ENCODE measurements at regions of chr12 and their contacts with region 1.

Region 1: DNA sequence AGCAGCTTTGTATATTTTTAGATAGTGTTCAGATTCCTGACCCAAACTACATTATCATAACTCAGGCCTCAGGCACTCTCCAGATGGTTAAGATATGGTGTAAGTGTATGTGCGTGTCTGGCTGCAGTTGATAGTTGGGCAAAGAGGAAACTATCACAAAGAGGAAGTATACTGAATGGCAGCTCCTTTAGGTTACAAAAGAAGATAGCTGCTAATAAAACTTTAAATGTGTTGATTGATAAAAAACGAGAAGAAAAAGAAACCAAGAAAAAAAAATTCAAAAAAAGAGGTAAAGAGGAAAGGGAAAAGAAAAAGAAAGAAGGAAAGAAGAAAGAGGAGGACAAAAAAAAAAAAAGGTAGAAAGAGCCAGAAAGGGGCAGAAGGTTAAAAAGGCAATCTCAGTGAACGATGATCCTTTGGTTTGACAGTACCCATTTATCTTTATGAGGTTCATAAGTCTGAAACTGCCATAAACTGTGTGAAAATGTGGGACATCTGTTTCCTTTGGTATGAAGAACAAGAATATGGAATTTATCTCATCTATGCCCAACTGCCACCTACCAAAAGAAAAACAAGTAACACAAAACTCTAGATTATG is 42.2 kb downstream of the TAOK3 start:
- DNase-seq: peak; percentile 93 to 99 (median 98)
- H3K4me3 ChIP-seq: peak overlapping the region in 2 of 7 experiments; percentile 50 to 55
- H3K27ac ChIP-seq: peak overlapping the region; percentile 80 to 88
- H3K4me1 ChIP-seq: peaks cover 21 to 81% (median 65%) of the 10 kb centered on the region in 4 experiments
- H3K27me3 ChIP-seq: no peaks in the 10 kb centered on the region

Region 2: GRCh38 chr12:118346895-118347294 is 16.4 kb after region 1 on chr12:
- CTCF ChIA-PET with region 1: interaction called, 19 read pairs
- POLR2A ChIA-PET with region 1: interaction called, 3 read pairs
- DNase-seq: peak in 2 of 3 donors; percentile 71 to 85
- H3K4me3 ChIP-seq: peak overlapping the region in 3 of 7 experiments; percentile 35 to 48 (median 41)
- H3K27ac ChIP-seq: peak overlapping the region; percentile 27 to 71
- H3K4me1 ChIP-seq: peaks cover 23 to 67% (median 36%) of the 10 kb centered on the region in 4 experiments
- H3K27me3 ChIP-seq: no peaks in the 10 kb centered on the region

Measured in common myeloid progenitor, CD34-positive (primary cell).